Mammary epithelial cell (primary cell): ENCODE measurements at regions of chr1 and their contacts with region 1.

Region 1: GRCh38 chr1:60765204-60765603 is 317.2 kb upstream of the NFIA start:
- DNase-seq: peak; percentile 24
- H3K4me3 ChIP-seq: no peak overlapping the region
- H3K27ac ChIP-seq: no peak overlapping the region
- H3K4me1 ChIP-seq: no peaks in the 10 kb centered on the region
- H3K27me3 ChIP-seq: no peaks in the 10 kb centered on the region
- CTCF ChIP-seq: peak; percentile 58 to 78

Region 2: DNA sequence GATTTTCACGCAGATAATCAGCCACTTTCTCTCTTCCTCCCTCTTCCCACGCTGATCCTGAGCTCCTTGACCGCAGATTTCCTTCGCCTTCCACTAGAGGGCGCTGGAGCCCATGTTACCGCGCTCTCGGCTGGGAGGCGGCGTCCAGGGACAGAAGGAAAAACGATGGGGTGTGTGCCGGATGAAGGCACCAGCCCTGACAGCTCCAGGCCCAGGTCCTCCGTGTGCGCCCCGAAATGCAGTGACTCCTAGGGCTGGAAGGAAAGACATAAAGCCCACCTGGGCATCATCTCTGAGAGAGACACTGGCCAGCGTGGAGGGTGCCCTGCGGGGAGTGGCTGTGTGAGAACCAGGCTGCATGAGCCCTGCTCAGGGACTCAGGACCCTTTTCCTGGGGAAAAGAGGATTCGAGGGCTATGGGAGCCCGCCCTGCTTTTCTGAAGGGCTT is 793.7 kb before region 1 on chr1:
- CTCF ChIA-PET with region 1: no interaction called
- dilution Hi-C with region 1: no loop called
- in situ Hi-C with region 1: no loop called
- intact Hi-C with region 1: loop called (anchors 5 kb)
- DNase-seq: peak; percentile 55
- H3K4me3 ChIP-seq: no peak overlapping the region
- H3K27ac ChIP-seq: no peak overlapping the region
- H3K4me1 ChIP-seq: no peaks in the 10 kb centered on the region
- H3K27me3 ChIP-seq: peaks cover 7% of the 10 kb centered on the region
- CTCF ChIP-seq: peak; percentile 83 to 93

Region 3: DNA sequence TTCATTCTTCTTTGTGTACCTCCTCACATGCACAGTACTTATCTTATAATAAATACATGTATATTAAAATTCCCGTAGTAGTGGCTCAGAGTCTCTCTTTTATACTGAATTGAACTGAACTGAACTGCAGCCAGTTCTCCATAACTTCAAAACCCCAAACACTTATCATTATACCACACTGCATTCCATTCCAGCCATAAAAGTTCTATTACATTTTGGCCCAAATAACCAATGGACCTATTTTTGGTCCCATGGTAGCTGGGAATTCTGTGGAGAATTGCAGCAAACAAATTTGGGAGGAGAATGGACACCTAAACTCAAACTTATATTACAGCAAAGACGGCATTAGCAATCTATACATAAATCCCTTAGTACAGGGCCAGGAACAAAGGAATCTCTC is 605.1 kb before region 1 on chr1:
- CTCF ChIA-PET with region 1: no interaction called
- dilution Hi-C with region 1: no loop called
- in situ Hi-C with region 1: no loop called
- intact Hi-C with region 1: loop called (anchors 1 kb)
- DNase-seq: no peak
- H3K4me3 ChIP-seq: no peak overlapping the region
- H3K27ac ChIP-seq: no peak overlapping the region
- H3K4me1 ChIP-seq: no peaks in the 10 kb centered on the region
- H3K27me3 ChIP-seq: peaks cover 14% of the 10 kb centered on the region
- CTCF ChIP-seq: no peak

Region 4: DNA sequence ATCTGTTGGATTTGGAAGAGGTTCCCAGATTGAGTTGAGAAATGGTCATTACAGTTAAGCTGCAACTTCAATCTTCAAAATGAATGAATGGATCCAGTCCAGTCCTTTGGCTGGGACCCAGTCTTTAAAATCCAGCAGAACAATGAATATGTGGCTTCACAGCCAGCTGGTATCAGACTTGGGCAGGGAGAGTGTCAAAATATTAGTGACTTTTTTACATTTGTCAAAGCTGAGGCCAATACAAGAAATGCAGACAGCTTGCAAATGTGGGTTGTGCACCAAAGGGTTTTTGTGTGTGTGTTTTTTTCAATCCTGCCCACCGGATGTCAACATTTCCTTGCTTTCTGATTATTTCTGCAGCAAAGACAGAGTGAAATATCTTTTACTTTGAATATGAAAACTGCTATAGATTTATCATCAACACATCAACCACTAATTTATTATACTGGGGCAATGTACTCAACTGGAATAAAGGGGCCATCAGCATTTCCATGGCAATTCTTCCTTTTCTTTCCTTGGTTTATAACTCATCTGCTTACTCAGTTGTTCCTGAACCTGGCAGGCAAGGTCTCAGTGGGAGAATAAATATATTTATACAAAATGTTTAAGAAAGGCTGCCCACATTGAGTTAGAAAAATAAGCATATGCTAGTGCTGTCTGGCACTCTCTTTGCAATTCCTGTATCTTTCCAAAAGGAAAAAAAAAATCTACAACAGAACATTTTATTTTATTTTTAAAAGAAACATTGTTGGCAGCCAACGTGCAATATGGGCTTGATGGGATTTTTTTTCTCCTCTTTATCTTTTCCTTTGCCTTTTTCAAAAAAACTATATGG is 200.1 kb before region 1 on chr1:
- CTCF ChIA-PET with region 1: no interaction called
- dilution Hi-C with region 1: no loop called
- in situ Hi-C with region 1: no loop called
- intact Hi-C with region 1: loop called (anchors 1 kb)
- DNase-seq: no peak
- H3K4me3 ChIP-seq: no peak overlapping the region
- H3K27ac ChIP-seq: no peak overlapping the region
- H3K4me1 ChIP-seq: peaks cover 10% of the 10 kb centered on the region
- H3K27me3 ChIP-seq: no peaks in the 10 kb centered on the region
- CTCF ChIP-seq: no peak